CD4-positive, alpha-beta memory T cell (primary cell): ENCODE measurements at regions of chr1 and their contacts with region 1.

Region 1: DNA sequence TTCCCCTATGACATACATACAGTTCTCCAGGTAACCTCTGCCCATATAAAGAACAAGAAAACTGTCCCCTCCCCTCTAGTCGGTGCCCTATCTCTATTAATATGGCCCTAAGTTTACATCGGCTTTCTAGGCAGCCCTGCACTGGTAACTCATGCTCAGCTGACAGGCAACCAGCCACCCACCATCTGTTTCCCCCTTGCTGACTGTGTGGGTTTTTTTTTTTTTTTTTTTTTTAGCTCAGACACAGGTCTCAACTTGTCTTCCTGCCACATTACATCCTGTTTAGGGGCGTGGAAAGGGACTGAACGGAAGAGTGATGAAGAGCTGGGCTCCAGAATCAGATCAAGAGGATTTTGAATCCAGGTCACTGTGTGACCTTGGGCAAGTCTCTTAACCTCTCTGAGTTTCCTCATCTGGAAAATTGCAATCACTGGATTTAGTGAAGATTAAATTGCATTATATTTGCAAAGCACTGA is 14.0 kb downstream of the LAPTM5 start:
- DNase-seq: peak; percentile 81 to 92 (median 86)
- H3K4me3 ChIP-seq: peak overlapping the region; percentile 30 to 48
- H3K4me3 Mint-ChIP-seq: peak overlapping the region; percentile 77 to 98 (median 89)
- H3K27ac ChIP-seq: peak overlapping the region; percentile 92
- H3K27ac Mint-ChIP-seq: peak overlapping the region; percentile 95 to 99 (median 98)
- H3K4me1 ChIP-seq: peaks cover 96% of the 10 kb centered on the region
- H3K4me1 Mint-ChIP-seq: peaks cover 77 to 99% (median 85%) of the 10 kb centered on the region in 4 donors
- H3K27me3 ChIP-seq: no peaks in the 10 kb centered on the region
- H3K27me3 Mint-ChIP-seq: no peaks in the 10 kb centered on the region

Region 2: GRCh38 chr1:30732277-30732996 is 11.2 kb before region 1 on chr1:
- CTCF ChIA-PET with region 1: interaction called, 4 read pairs
- POLR2A ChIA-PET with region 1: interaction called, 1,160 read pairs
- intact Hi-C with region 1: loop called (anchors 1 kb)
- DNase-seq: peak in 1 of 5 donors; percentile 54
- H3K4me3 ChIP-seq: no peak overlapping the region
- H3K4me3 Mint-ChIP-seq: peak overlapping the region in 2 of 8 donors; percentile 25 to 26
- H3K27ac ChIP-seq: no peak overlapping the region
- H3K27ac Mint-ChIP-seq: peak overlapping the region; percentile 5 to 83 (median 74)
- H3K4me1 ChIP-seq: peaks cover 16% of the 10 kb centered on the region
- H3K4me1 Mint-ChIP-seq: peaks cover 8 to 32% (median 22%) of the 10 kb centered on the region in 4 donors
- H3K27me3 ChIP-seq: no peaks in the 10 kb centered on the region
- H3K27me3 Mint-ChIP-seq: no peaks in the 10 kb centered on the region

Region 3: DNA sequence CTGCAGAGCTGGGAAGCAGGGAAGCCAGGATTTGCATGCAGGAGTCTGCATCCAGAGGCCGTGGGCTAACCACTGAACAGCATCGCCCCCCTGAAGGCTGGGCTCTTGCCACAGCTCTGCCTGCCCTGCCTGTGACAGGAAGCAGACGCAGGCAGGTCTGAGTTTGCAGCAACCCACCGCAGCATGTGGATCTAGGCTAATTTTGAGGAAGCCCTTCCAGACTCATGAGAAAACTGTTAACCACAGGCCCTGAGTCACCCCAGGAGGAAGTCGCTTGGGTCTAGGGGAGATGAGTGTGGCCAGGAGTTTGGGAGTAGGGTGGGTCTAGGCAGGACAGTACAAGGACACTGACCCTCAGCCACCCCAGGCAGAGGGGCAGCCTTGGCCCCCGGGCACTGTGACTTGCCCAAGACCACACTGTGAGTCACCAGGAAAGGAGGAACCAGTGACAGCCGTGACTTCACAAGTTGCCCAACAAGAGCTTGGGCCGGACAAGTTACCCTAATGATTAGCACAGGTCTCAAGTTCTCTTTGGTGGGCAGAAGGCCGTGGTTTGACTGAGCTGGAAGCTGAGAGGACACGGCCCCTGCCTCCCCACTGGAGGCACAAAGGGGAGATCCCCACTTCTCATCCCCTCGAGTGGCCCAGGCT is 13.0 kb after region 1 on chr1:
- CTCF ChIA-PET with region 1: interaction called, 111 read pairs
- POLR2A ChIA-PET with region 1: interaction called, 1,160 read pairs
- intact Hi-C with region 1: loop called (anchors 1 kb)
- DNase-seq: peak; percentile 69 to 94 (median 75)
- H3K4me3 ChIP-seq: peak overlapping the region; percentile 96
- H3K4me3 Mint-ChIP-seq: peak overlapping the region; percentile 97 to 100 (median 100)
- H3K27ac ChIP-seq: peak overlapping the region; percentile 92
- H3K27ac Mint-ChIP-seq: peak overlapping the region; percentile 95 to 100 (median 98)
- H3K4me1 ChIP-seq: peaks cover 84% of the 10 kb centered on the region
- H3K4me1 Mint-ChIP-seq: peaks cover 57 to 100% (median 69%) of the 10 kb centered on the region in 4 donors
- H3K27me3 ChIP-seq: no peaks in the 10 kb centered on the region
- H3K27me3 Mint-ChIP-seq: no peaks in the 10 kb centered on the region